ENCODE measurements at regions of chr7 and their contacts with region 1.

Region 1: DNA sequence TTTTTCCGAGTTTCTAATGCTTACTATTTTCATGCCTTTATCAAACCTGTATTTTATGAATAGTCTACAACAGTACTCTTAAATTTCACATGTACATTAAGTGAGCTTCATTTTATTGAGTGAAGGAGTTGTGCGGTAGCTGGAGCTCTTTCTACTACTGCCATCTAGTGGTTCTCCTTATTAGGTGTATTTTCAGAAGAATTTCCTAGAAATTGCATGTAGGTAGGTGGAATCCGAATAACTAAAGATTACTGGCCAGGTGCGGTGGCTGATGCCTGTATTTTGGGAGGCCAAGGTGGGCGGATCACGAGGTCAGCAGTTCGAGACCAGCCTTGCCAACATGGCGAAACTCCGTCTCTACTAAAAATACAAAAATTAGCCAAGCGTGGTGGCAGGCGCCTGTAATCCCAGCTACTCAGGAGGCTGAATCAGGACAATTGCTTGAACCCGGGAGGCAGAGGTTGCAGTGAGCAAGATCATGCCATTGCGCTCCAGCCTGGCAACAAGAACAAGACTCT is 38.3 kb downstream of the LRRC72 start:
- DNase-seq: no peak
- H3K4me3 ChIP-seq: no peak overlapping the region
- H3K27ac ChIP-seq: no peak overlapping the region
- H3K4me1 ChIP-seq: no peaks in the 10 kb centered on the region
- H3K27me3 ChIP-seq: no peaks in the 10 kb centered on the region
- CTCF ChIP-seq: peak; percentile 15 to 41 (median 31)
- EP300 ChIP-seq: no peak
- POLR2A ChIP-seq: no peak

Region 2: GRCh38 chr7:16071246-16071857 is 493.6 kb before region 1 on chr7:
- intact Hi-C with region 1: loop called in 1 of 4 experiments (anchors 10 kb)
- DNase-seq: peak in 1 of 5 donors; percentile 18
- H3K4me3 ChIP-seq: no peak overlapping the region
- H3K27ac ChIP-seq: no peak overlapping the region
- H3K4me1 ChIP-seq: peaks cover 3% of the 10 kb centered on the region
- H3K27me3 ChIP-seq: no peaks in the 10 kb centered on the region
- CTCF ChIP-seq: peak; percentile 49 to 81 (median 80)
- EP300 ChIP-seq: no peak
- POLR2A ChIP-seq: no peak

Region 3: DNA sequence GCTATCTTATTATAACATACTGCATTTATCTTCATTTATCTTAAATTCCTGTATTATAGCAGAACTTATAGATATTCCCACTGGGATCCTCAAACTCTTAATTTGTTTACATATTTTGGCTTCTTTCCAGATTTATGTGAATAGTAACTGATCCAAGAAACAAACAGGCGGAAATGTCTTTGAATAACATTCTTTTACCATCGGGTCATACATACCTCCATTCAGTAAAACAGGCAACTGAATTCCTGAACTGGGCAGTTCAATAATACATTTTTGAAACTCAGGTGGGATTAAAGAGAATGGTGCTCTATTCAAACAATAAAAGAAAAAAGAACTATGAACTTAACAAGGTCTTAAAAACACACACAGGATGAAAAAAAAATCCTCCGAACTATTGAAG is 481.0 kb before region 1 on chr7:
- intact Hi-C with region 1: loop called in 2 of 4 experiments (anchors 10 kb)
- DNase-seq: no peak
- H3K4me3 ChIP-seq: no peak overlapping the region
- H3K27ac ChIP-seq: no peak overlapping the region
- H3K4me1 ChIP-seq: no peaks in the 10 kb centered on the region
- H3K27me3 ChIP-seq: no peaks in the 10 kb centered on the region
- CTCF ChIP-seq: no peak
- EP300 ChIP-seq: no peak
- POLR2A ChIP-seq: no peak

Region 4: DNA sequence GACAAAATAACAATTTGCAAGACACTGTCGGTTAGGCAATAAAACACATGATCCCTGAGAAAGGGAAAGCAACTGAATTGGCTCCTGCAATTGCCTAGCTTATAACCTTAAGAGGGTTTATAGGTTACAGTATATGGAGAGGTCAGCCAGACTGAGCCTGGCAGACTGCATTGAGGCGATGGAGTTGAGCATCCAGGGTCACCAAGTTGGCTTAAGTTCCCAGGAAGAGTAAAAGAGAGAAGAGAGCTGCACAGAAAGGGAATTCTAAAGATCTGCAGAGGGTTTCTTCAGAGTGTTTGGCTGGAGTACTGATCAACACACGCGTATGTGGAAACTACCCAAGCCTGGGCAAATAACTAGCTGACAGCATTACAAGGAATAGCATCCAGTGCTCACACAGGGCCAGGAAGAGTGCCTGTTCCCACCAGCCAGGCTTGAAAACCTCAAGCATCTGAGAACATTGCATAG is 69.3 kb after region 1 on chr7:
- intact Hi-C with region 1: no loop called
- DNase-seq: no peak
- H3K4me3 ChIP-seq: no peak overlapping the region
- H3K27ac ChIP-seq: no peak overlapping the region
- H3K4me1 ChIP-seq: peaks cover 2% of the 10 kb centered on the region
- H3K27me3 ChIP-seq: no peaks in the 10 kb centered on the region
- CTCF ChIP-seq: no peak
- EP300 ChIP-seq: no peak
- POLR2A ChIP-seq: no peak

Measured in ovary (tissue), 10 donors.